ENCODE measurements at regions of chr3 and their contacts with region 1.

Region 1: GRCh38 chr3:25789596-25790556 is at the start of gene OXSM:
- DNase-seq: peak; percentile 78 to 98 (median 86)
- ATAC-seq: peak; percentile 92
- H3K4me3 ChIP-seq: peak within 1 kb of the TSS; percentile 75
- H3K4me3 Mint-ChIP-seq: peak within 1 kb of the TSS; percentile 98
- H3K27ac ChIP-seq: peak within 1 kb of the TSS; percentile 83 to 91
- H3K27ac Mint-ChIP-seq: peak within 1 kb of the TSS; percentile 94
- H3K4me1 ChIP-seq: peaks cover 15% of the 10 kb centered on the region
- H3K4me1 Mint-ChIP-seq: peaks cover 56% of the 10 kb centered on the region
- H3K27me3 ChIP-seq: no peaks in the 10 kb centered on the region
- H3K27me3 Mint-ChIP-seq: no peaks in the 10 kb centered on the region
- CTCF ChIP-seq: no peak
- total RNA-seq, gene OXSM: 6.2 to 7.9 TPM

Region 2: GRCh38 chr3:23805633-23806533 is 1984.0 kb before region 1 on chr3 and contains the start of gene UBE2E1:
- CTCF ChIA-PET with region 1: no interaction called
- POLR2A ChIA-PET with region 1: no interaction called
- intact Hi-C with region 1: loop called in 1 of 2 experiments (anchors 10 kb)
- DNase-seq: peak; percentile 62 to 93 (median 70)
- ATAC-seq: peak; percentile 85
- H3K4me3 ChIP-seq: peak within 1 kb of the TSS; percentile 66
- H3K4me3 Mint-ChIP-seq: peak within 1 kb of the TSS; percentile 99
- H3K27ac ChIP-seq: peak within 1 kb of the TSS in 1 of 2 donors; percentile 64
- H3K27ac Mint-ChIP-seq: peak within 1 kb of the TSS; percentile 91
- H3K4me1 ChIP-seq: peaks cover 32% of the 10 kb centered on the region
- H3K4me1 Mint-ChIP-seq: peaks cover 47% of the 10 kb centered on the region
- H3K27me3 ChIP-seq: no peaks in the 10 kb centered on the region
- H3K27me3 Mint-ChIP-seq: no peaks in the 10 kb centered on the region
- CTCF ChIP-seq: no peak
- total RNA-seq, gene UBE2E1: 49.8 to 52.2 TPM

Region 3: DNA sequence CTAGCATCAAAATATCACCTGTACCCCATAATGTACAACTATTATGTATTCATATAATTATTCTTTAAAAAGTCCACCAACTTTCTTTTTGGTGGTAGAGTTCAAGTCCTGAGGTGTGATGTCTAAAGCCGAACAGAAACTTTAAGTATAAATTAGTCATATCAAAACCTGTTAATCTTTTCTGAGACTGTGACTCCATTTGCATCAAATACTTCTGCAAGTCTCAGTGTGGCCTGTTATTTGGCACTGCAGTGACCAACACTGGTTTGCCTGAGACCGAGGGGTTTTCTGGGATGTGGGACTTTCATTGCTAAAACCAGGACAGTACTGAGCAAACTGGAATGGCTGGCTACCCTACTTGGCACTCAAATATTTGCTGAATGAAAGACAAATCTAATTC is 13.9 kb before region 1 on chr3:
- CTCF ChIA-PET with region 1: no interaction called
- POLR2A ChIA-PET with region 1: no interaction called
- intact Hi-C with region 1: no loop called
- DNase-seq: no peak
- ATAC-seq: no peak
- H3K4me3 ChIP-seq: no peak overlapping the region
- H3K4me3 Mint-ChIP-seq: no peak overlapping the region
- H3K27ac ChIP-seq: no peak overlapping the region
- H3K27ac Mint-ChIP-seq: no peak overlapping the region
- H3K4me1 ChIP-seq: peaks cover 5% of the 10 kb centered on the region
- H3K4me1 Mint-ChIP-seq: peaks cover 63% of the 10 kb centered on the region
- H3K27me3 ChIP-seq: no peaks in the 10 kb centered on the region
- H3K27me3 Mint-ChIP-seq: no peaks in the 10 kb centered on the region
- CTCF ChIP-seq: no peak

Region 4: GRCh38 chr3:25817107-25817506 is 27.2 kb after region 1 on chr3:
- CTCF ChIA-PET with region 1: no interaction called
- POLR2A ChIA-PET with region 1: no interaction called
- intact Hi-C with region 1: no loop called
- DNase-seq: no peak
- ATAC-seq: no peak
- H3K4me3 ChIP-seq: no peak overlapping the region
- H3K4me3 Mint-ChIP-seq: no peak overlapping the region
- H3K27ac ChIP-seq: no peak overlapping the region
- H3K27ac Mint-ChIP-seq: no peak overlapping the region
- H3K4me1 ChIP-seq: no peaks in the 10 kb centered on the region
- H3K4me1 Mint-ChIP-seq: no peaks in the 10 kb centered on the region
- H3K27me3 ChIP-seq: no peaks in the 10 kb centered on the region
- H3K27me3 Mint-ChIP-seq: peaks cover 4% of the 10 kb centered on the region
- CTCF ChIP-seq: no peak

Region 5: GRCh38 chr3:27368831-27369607 is 1579.1 kb after region 1 on chr3 and contains the start of gene NEK10:
- CTCF ChIA-PET with region 1: no interaction called
- POLR2A ChIA-PET with region 1: no interaction called
- intact Hi-C with region 1: loop called in 1 of 2 experiments (anchors 5 kb)
- DNase-seq: peak; percentile 84 to 96 (median 91)
- ATAC-seq: peak; percentile 96
- H3K4me3 ChIP-seq: peak within 1 kb of the TSS; percentile 73
- H3K4me3 Mint-ChIP-seq: peak within 1 kb of the TSS; percentile 91
- H3K27ac ChIP-seq: no peak within 1 kb of the TSS
- H3K27ac Mint-ChIP-seq: peak within 1 kb of the TSS; percentile 59
- H3K4me1 ChIP-seq: peaks cover 9% of the 10 kb centered on the region
- H3K4me1 Mint-ChIP-seq: peaks cover 15% of the 10 kb centered on the region
- H3K27me3 ChIP-seq: no peaks in the 10 kb centered on the region
- H3K27me3 Mint-ChIP-seq: no peaks in the 10 kb centered on the region
- CTCF ChIP-seq: peak; percentile 13
- total RNA-seq, gene NEK10: 0.61 to 0.77 TPM